Activated CD4-positive, alpha-beta memory T cell treated with anti-CD3 and anti-CD28 coated beads, Interleukin-2, amount 10 ng/mL, durations not matched to agents 7 days and 5 days (primary cell): ENCODE measurements at regions of chr7 and their contacts with region 1.

Region 1: DNA sequence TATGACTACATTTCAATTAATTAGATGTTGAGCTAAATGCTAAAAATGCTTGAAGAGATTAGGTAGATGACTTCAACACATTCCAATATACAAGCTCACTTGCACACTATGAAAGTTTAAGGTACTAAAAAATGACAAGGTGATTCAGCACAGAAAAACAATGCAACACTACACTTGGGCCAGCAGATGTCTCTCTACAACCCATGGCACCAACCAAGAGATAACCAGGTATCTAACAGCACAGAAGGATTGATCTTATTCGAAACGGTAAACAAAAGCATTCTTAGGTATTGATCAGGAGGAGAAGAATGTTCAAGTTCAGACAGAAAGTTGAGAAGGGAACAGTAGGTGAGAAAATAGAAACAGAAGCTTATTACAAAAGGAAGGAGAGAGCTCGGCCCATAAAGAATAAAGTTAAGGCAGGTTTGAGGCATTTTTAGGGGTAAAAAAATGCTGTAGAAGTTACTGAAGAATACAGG is 248.2 kb upstream of the KLF14 start:
- DNase-seq: no peak
- H3K4me3 Mint-ChIP-seq: no peak overlapping the region
- H3K27ac Mint-ChIP-seq: no peak overlapping the region
- H3K4me1 Mint-ChIP-seq: peaks cover 46% of the 10 kb centered on the region
- H3K27me3 Mint-ChIP-seq: no peaks in the 10 kb centered on the region

Region 2: DNA sequence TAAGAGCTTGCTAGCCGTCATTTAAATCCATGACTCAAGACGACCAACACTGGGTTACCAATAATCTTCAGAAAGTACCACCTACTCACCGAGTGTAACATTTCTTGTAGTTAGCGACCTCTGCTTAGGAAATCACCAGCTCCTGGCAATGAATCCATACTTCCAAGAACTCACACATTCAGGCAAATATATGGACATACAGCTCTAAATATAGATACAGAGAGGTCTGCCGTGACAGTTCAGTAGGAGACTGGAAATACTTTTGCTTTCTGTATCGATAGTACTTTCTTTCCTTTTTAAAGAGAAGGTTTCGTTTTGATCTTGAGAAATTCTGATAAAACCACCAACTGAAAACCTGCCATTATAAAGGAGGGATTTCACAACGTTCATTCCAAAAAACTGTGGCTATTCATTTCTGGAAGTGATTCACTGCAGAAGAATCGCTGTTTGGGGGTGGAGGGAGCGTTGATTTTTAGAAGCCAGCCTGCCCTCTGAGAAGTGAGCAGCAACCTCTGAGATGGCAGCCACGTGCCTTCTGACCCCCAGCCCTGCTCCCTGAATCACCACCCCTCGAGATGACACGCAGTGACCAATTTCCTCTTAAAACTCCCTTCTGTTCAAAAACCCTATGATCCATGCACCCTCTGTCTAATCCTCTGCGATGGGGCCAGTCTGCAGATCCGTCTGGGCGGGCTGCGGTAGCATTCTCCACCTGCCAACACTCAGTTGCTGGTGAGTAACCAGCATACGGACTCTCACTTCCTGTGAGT is 69.2 kb before region 1 on chr7:
- CTCF ChIA-PET with region 1: interaction called, 5 read pairs
- POLR2A ChIA-PET with region 1: interaction called, 10 read pairs
- DNase-seq: peak; percentile 87
- H3K4me3 Mint-ChIP-seq: peak overlapping the region; percentile 84
- H3K27ac Mint-ChIP-seq: peak overlapping the region; percentile 97
- H3K4me1 Mint-ChIP-seq: peaks cover 92% of the 10 kb centered on the region
- H3K27me3 Mint-ChIP-seq: no peaks in the 10 kb centered on the region

Region 3: DNA sequence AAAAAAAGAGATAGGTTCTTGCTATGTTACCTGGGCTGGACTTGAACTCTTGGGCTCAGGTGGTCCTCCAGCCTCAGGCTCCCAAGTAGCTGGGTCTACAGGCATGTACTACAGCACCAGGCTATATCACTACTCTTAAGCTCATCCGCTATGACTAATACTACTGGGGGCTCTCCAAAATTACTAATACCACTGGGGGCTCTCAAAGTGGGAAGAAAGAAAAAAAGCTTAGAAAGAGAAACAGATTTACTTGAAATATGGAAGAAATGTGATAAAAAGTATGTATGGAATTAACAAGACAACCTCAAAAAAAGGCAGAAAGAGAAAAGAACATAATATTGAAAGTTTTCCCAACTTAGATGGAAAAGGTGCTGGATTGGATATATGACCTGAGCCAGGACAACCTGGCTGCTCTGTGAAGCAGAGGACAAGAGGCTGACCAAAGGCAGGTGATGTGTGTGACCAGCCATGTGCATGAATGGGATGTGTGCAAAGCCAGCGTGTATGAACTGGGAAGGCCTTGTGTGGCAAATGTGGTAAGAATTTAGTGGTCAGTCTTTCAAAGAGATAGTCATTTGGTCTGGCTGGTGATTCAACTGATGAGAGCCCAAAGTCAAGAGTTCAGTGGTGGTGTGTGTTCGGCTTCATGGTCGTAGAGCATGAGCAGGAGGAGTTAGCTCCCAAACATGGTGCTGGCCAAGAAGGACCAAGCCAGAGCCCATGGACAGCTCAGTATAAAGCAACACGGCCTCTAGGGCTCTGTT is 15.8 kb before region 1 on chr7:
- CTCF ChIA-PET with region 1: interaction called, 33 read pairs
- POLR2A ChIA-PET with region 1: interaction called, 43 read pairs
- DNase-seq: no peak
- H3K4me3 Mint-ChIP-seq: no peak overlapping the region
- H3K27ac Mint-ChIP-seq: peak overlapping the region; percentile 49
- H3K4me1 Mint-ChIP-seq: peaks cover 73% of the 10 kb centered on the region
- H3K27me3 Mint-ChIP-seq: no peaks in the 10 kb centered on the region

Region 4: DNA sequence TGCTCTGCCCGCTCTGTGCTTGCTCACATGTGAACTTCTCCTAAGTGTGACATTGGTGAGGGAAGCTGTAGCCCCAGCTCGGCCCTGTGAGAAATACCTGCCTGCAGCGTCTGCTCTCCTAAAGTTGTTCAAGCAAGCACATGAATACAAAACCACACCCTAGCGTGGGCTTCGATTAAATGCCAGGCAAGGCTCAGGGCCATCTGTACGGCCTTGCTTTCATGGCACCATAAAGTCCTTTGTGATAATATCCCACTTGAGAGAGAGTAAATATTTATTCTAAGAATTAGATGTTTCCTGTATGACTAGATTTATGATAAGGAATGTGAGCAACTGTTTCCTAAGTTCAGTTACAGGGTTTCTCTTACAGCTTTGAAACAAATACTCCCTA is 14.6 kb after region 1 on chr7:
- CTCF ChIA-PET with region 1: interaction called, 39 read pairs
- POLR2A ChIA-PET with region 1: interaction called, 12 read pairs
- DNase-seq: no peak
- H3K4me3 Mint-ChIP-seq: peak overlapping the region; percentile 51
- H3K27ac Mint-ChIP-seq: peak overlapping the region; percentile 85
- H3K4me1 Mint-ChIP-seq: peaks cover 78% of the 10 kb centered on the region
- H3K27me3 Mint-ChIP-seq: no peaks in the 10 kb centered on the region

Region 5: DNA sequence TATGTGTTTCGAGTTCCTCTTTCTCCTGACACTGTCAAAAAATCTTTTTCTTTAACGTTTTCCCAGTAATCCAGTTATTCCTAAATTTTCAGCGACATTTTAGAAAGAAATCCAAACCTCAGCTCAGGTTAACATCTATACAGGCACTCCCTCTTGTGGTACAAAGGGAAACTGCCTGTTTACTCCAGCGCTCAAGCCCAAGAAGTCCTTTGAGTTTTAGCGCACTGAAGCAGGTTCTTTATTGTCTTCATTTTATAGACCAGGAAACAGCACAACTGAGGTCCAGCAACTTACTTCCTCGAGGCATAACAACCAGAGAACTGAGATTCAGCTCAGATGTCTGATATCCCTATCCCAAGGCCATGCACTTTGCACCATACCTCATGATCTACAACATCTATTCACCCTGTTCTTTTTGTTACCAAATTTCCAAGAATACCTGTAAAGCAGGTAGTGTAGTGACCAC is 58.3 kb after region 1 on chr7:
- CTCF ChIA-PET with region 1: interaction called, 51 read pairs
- POLR2A ChIA-PET with region 1: interaction called, 8 read pairs
- DNase-seq: peak; percentile 52
- H3K4me3 Mint-ChIP-seq: no peak overlapping the region
- H3K27ac Mint-ChIP-seq: no peak overlapping the region
- H3K4me1 Mint-ChIP-seq: peaks cover 47% of the 10 kb centered on the region
- H3K27me3 Mint-ChIP-seq: no peaks in the 10 kb centered on the region